T-cell (primary cell): ENCODE measurements at regions of chr3 and their contacts with region 1.

Region 1: GRCh38 chr3:170357176-170357919 is at the start of gene SKIL:
- DNase-seq: peak; percentile 86 to 99 (median 98)
- ATAC-seq: peak; percentile 78 to 82 (median 81)
- H3K4me3 ChIP-seq: peak within 1 kb of the TSS; percentile 66 to 76
- H3K4me3 Mint-ChIP-seq: peak within 1 kb of the TSS; percentile 79 to 90 (median 89)
- H3K27ac ChIP-seq: peak within 1 kb of the TSS; percentile 93
- H3K27ac Mint-ChIP-seq: peak within 1 kb of the TSS; percentile 94 to 98
- H3K4me1 ChIP-seq: peaks cover 11 to 24% of the 10 kb centered on the region in 2 experiments
- H3K4me1 Mint-ChIP-seq: peaks cover 46 to 71% (median 51%) of the 10 kb centered on the region in 3 donors
- H3K27me3 ChIP-seq: no peaks in the 10 kb centered on the region
- H3K27me3 Mint-ChIP-seq: no peaks in the 10 kb centered on the region
- total RNA-seq, gene SKIL: 69.1 to 97.7 (median 78.5) TPM

Region 2: DNA sequence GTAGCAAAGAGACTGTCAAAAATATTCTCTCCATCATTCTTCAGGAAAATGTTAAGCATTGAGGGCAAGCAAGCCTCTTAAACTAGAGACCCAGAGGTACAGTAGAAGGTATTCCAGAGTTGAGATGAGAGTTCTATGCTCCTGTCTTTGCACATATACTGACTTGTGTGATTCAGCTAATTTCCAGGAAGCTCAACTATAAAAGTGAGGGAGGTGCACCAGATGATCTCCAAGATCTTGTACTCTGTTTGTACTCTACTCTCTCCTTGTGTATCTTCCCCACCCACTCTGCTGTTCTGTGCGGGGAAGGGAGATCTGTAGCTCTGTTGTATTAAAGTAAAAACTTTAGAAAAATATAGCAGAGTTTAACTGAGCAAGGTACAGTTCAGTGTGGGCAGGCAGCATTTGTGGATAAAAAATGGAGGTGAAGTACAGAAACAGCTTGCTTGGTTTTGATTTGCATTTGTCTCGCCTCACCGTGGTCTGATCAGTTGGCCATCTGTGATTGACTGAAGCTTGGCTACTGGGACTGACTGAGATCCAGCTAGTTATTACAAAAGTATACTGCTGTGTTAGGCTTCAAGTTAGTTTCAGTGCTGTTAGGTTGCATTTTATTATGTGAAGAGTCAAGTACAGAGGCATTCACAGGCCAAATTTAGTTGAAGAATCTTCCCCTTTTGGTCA is 1798.5 kb before region 1 on chr3:
- CTCF ChIA-PET with region 1: no interaction called
- POLR2A ChIA-PET with region 1: no interaction called
- DNase-seq: no peak
- ATAC-seq: no peak
- H3K4me3 ChIP-seq: no peak overlapping the region
- H3K4me3 Mint-ChIP-seq: no peak overlapping the region
- H3K27ac ChIP-seq: no peak overlapping the region
- H3K27ac Mint-ChIP-seq: no peak overlapping the region
- H3K4me1 ChIP-seq: no peaks in the 10 kb centered on the region
- H3K4me1 Mint-ChIP-seq: no peaks in the 10 kb centered on the region
- H3K27me3 ChIP-seq: no peaks in the 10 kb centered on the region
- H3K27me3 Mint-ChIP-seq: no peaks in the 10 kb centered on the region

Region 3: GRCh38 chr3:170154569-170155143 is 202.7 kb before region 1 on chr3:
- CTCF ChIA-PET with region 1: no interaction called
- POLR2A ChIA-PET with region 1: no interaction called
- DNase-seq: peak in 1 of 35 experiments; percentile 26
- ATAC-seq: peak; percentile 77 to 90 (median 84)
- H3K4me3 ChIP-seq: peak overlapping the region in 1 of 2 donors; percentile 19
- H3K4me3 Mint-ChIP-seq: peak overlapping the region; percentile 59 to 78 (median 61)
- H3K27ac ChIP-seq: peak overlapping the region; percentile 52
- H3K27ac Mint-ChIP-seq: peak overlapping the region; percentile 93 to 98
- H3K4me1 ChIP-seq: peaks cover 24 to 30% of the 10 kb centered on the region in 2 experiments
- H3K4me1 Mint-ChIP-seq: peaks cover 55 to 65% (median 57%) of the 10 kb centered on the region in 3 donors
- H3K27me3 ChIP-seq: no peaks in the 10 kb centered on the region
- H3K27me3 Mint-ChIP-seq: no peaks in the 10 kb centered on the region

Region 4: GRCh38 chr3:170180908-170181879 is 176.2 kb before region 1 on chr3 and contains the start of gene PHC3:
- CTCF ChIA-PET with region 1: interaction called in 1 of 2 experiments, 3 read pairs
- POLR2A ChIA-PET with region 1: interaction called, 5 to 20 read pairs
- DNase-seq: peak; percentile 82 to 96 (median 87)
- ATAC-seq: peak; percentile 76 to 81 (median 79)
- H3K4me3 ChIP-seq: peak within 1 kb of the TSS; percentile 97 to 98
- H3K4me3 Mint-ChIP-seq: peak within 1 kb of the TSS; percentile 94 to 99 (median 97)
- H3K27ac ChIP-seq: peak within 1 kb of the TSS; percentile 100
- H3K27ac Mint-ChIP-seq: peak within 1 kb of the TSS; percentile 99 to 100
- H3K4me1 ChIP-seq: peaks cover 24 to 32% of the 10 kb centered on the region in 2 experiments
- H3K4me1 Mint-ChIP-seq: peaks cover 33 to 44% (median 34%) of the 10 kb centered on the region in 3 donors
- H3K27me3 ChIP-seq: no peaks in the 10 kb centered on the region
- H3K27me3 Mint-ChIP-seq: no peaks in the 10 kb centered on the region
- total RNA-seq, gene PHC3: 132 to 173 (median 150) TPM

Region 5: DNA sequence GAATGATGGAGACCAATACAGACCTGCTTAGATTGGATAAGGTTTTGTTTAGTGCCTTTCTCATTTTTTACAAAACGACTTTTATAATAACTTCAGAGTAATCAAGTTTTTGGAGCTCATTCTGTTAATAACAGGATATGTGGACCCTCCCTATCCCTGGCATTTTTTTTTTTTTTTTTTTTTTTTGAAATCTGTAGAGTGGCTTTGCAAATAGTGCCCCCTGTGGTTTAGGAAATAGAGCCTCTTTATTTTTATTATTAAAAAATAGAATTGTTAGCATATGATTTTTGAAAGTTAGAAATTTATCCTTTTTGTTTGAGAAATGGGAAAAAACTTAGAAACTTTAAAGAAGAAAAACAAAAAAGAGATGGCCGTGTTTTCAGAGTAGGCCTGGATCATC is 11.6 kb after region 1 on chr3:
- CTCF ChIA-PET with region 1: interaction called, 6 to 9 read pairs
- POLR2A ChIA-PET with region 1: interaction called, 3 to 15 read pairs
- DNase-seq: peak in 1 of 35 experiments; percentile 41
- ATAC-seq: no peak
- H3K4me3 ChIP-seq: no peak overlapping the region
- H3K4me3 Mint-ChIP-seq: no peak overlapping the region
- H3K27ac ChIP-seq: no peak overlapping the region
- H3K27ac Mint-ChIP-seq: no peak overlapping the region
- H3K4me1 ChIP-seq: peaks cover 0 to 3% of the 10 kb centered on the region in 2 experiments
- H3K4me1 Mint-ChIP-seq: peaks cover 39 to 54% (median 50%) of the 10 kb centered on the region in 3 donors
- H3K27me3 ChIP-seq: no peaks in the 10 kb centered on the region
- H3K27me3 Mint-ChIP-seq: no peaks in the 10 kb centered on the region

Region 6: DNA sequence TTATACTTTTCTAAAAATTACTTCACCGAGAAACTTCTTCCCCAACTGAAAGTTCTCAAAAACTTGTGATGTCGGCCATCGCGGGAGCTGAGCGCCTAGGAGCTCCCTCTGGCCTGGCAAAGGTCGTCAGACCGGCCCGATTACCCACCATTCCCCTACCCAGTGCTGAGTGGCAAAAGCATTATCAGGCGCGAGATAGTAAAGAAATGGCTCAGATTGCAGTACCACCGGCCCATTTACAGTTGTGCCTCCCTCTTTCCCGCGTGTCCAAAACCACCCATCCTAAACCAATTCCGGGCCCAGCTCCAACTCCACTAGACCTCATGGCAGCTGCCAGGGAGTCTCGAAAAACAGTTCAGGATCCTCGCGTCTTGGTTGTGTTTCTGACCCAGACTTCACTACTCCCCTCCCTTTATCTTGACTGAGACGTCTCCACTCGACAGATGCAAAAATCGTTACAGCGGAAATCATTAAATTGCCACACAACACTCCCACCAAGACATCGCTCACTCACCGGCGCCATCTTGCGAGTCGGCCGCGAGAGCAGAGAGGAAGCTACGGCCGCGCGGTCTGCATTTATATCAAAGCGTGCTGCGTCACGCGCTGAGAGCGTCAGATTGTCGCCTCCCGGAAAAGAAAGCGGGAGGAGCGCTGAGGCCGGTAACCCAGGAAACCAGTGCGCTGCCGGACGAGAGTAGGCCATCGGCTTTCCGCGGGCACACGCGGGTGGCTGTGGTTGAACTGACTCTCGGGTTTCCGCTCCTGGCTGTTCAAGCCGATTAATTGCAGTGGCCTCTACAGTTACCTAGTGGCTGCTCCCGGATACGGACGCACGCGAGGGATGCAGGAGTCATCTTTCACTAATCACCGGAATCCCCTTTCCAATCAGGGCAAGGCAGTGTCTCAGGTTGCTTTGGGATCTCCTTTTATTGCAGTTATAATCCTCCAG is 512.6 kb after region 1 on chr3 and contains the start of gene RPL22L1:
- CTCF ChIA-PET with region 1: no interaction called
- POLR2A ChIA-PET with region 1: interaction called in 1 of 2 experiments, 16 read pairs
- DNase-seq: peak; percentile 84 to 97 (median 91)
- ATAC-seq: peak; percentile 95 to 97 (median 96)
- H3K4me3 ChIP-seq: peak within 1 kb of the TSS; percentile 73 to 97
- H3K4me3 Mint-ChIP-seq: peak within 1 kb of the TSS; percentile 90 to 93 (median 93)
- H3K27ac ChIP-seq: peak within 1 kb of the TSS; percentile 86
- H3K27ac Mint-ChIP-seq: peak within 1 kb of the TSS; percentile 92 to 96
- H3K4me1 ChIP-seq: peaks cover 14 to 20% of the 10 kb centered on the region in 2 experiments
- H3K4me1 Mint-ChIP-seq: peaks cover 32 to 38% (median 35%) of the 10 kb centered on the region in 3 donors
- H3K27me3 ChIP-seq: no peaks in the 10 kb centered on the region
- H3K27me3 Mint-ChIP-seq: no peaks in the 10 kb centered on the region
- total RNA-seq, gene RPL22L1: 21.3 to 56.2 (median 29.9) TPM